Sciatic nerve (tissue), 2 donors: ENCODE measurements at regions of chr5 and their contacts with region 1.

Region 1: GRCh38 chr5:34486160-34486848 is 169.8 kb upstream of the RAI14 start:
- DNase-seq: peak; percentile 93
- ATAC-seq: peak; percentile 85

Region 2: GRCh38 chr5:34898258-34898895 is 412.1 kb after region 1 on chr5:
- intact Hi-C with region 1: loop called (anchors 10 kb)
- DNase-seq: peak; percentile 80
- ATAC-seq: peak; percentile 90